ENCODE measurements at regions of chr6 and their contacts with region 1.

Region 1: GRCh38 chr6:116111552-116112528 is 11.2 kb downstream of the NT5DC1 start:
- DNase-seq: peak; percentile 34 to 51 (median 45)
- H3K4me3 ChIP-seq: no peak overlapping the region
- H3K27ac ChIP-seq: no peak overlapping the region
- H3K4me1 ChIP-seq: no peaks in the 10 kb centered on the region
- H3K27me3 ChIP-seq: no peaks in the 10 kb centered on the region

Region 2: GRCh38 chr6:116100419-116101301 is 11.2 kb before region 1 on chr6 and contains the start of gene NT5DC1:
- CTCF ChIA-PET with region 1: interaction called, 13 read pairs
- POLR2A ChIA-PET with region 1: no interaction called
- DNase-seq: peak; percentile 87 to 92 (median 90)
- H3K4me3 ChIP-seq: peak within 1 kb of the TSS; percentile 65 to 95 (median 85)
- H3K27ac ChIP-seq: peak within 1 kb of the TSS; percentile 48 to 75
- H3K4me1 ChIP-seq: peaks cover 7 to 32% (median 24%) of the 10 kb centered on the region in 4 experiments
- H3K27me3 ChIP-seq: no peaks in the 10 kb centered on the region

Measured in common myeloid progenitor, CD34-positive (primary cell).